Colonic mucosa (tissue), 4 donors: ENCODE measurements at regions of chr6 and their contacts with region 1.

Region 1: DNA sequence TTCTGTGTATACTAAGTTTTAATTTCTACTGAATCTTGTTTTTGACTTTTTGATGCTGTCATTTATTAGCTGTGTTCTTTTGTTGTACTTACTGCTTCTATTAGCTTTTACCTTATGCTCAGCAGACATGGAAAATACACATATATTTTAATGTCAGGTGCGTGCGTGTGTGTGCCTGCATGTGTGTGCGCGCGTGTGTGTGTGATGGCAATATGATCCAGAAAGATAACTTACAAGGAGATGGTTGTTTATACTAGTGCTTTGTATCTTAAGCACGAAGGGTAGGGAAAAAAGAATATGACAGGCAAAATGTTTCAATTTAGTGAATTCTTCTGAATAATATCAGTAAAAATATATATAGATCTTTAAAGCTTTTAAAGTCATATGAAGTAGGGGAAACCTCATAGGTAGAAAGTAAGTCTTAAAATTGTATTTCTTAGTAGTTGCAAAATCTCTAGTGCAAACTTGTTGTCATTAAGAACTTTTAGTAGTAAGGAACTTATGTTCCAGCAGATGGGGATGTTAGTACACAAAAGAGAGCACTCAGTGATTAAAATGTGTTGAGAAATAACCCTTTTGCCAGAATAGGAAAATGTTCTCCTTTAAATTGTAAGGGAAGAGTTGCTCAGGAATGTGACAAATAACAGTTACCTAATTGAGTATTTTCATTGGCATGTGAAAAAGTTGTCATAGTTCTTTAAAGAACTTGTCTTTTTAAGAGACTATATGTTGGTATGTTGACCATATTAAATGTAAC is 13.2 kb downstream of the QKI start:
- DNase-seq: no peak
- H3K4me3 ChIP-seq: no peak overlapping the region
- H3K27ac ChIP-seq: no peak overlapping the region
- H3K4me1 ChIP-seq: no peaks in the 10 kb centered on the region
- H3K27me3 ChIP-seq: no peaks in the 10 kb centered on the region
- CTCF ChIP-seq: peak; percentile 20

Region 2: GRCh38 chr6:163137398-163137881 is 290.2 kb before region 1 on chr6:
- intact Hi-C with region 1: no loop called
- DNase-seq: no peak
- H3K4me3 ChIP-seq: no peak overlapping the region
- H3K27ac ChIP-seq: no peak overlapping the region
- H3K4me1 ChIP-seq: no peaks in the 10 kb centered on the region
- H3K27me3 ChIP-seq: no peaks in the 10 kb centered on the region
- CTCF ChIP-seq: no peak

Region 3: DNA sequence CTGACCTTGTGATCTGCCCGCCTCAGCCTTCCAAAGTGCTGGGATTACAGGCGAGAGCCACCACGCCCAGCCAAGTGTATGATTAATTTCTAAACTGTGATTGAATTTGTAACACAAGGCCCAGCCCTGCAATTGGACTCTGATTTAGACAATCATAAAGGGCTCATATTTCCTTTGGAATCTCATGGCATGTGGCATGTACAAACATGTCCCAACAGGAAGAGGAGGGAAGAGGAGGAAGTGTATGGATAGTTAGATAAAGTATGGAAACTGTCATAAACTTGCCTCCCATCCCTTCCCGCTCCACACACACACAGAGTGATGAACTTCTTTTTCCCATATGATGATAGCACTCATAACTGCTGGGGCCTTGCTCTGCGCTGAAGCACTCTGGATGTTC is 40.4 kb before region 1 on chr6:
- intact Hi-C with region 1: no loop called
- DNase-seq: peak; percentile 35
- H3K4me3 ChIP-seq: no peak overlapping the region
- H3K27ac ChIP-seq: no peak overlapping the region
- H3K4me1 ChIP-seq: no peaks in the 10 kb centered on the region
- H3K27me3 ChIP-seq: no peaks in the 10 kb centered on the region
- CTCF ChIP-seq: no peak

Region 4: DNA sequence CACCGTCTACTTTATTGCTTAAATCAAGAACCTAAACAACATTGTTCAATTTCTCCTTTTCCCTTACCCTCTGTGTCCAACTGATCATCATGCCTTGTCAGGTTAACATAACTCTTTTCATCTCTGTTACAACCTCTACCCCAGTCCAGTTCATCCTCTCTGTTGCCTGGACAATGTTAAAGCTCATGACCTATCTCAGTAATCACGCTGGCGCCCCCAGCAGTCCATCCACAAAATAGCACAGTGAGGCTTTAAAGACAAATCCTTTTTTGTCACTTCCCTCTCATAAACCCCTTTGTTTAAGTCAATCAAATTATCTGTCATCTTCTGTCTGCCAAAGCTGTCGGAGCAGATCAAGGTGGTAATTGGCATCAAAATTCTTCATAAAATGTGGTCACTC is 127.0 kb after region 1 on chr6:
- intact Hi-C with region 1: loop called (anchors 5 kb)
- DNase-seq: peak; percentile 47
- H3K4me3 ChIP-seq: no peak overlapping the region
- H3K27ac ChIP-seq: no peak overlapping the region
- H3K4me1 ChIP-seq: no peaks in the 10 kb centered on the region
- H3K27me3 ChIP-seq: no peaks in the 10 kb centered on the region
- CTCF ChIP-seq: peak; percentile 49

Region 5: GRCh38 chr6:163872335-163872734 is 444.7 kb after region 1 on chr6:
- intact Hi-C with region 1: no loop called
- DNase-seq: no peak
- H3K4me3 ChIP-seq: no peak overlapping the region
- H3K27ac ChIP-seq: no peak overlapping the region
- H3K4me1 ChIP-seq: no peaks in the 10 kb centered on the region
- H3K27me3 ChIP-seq: no peaks in the 10 kb centered on the region
- CTCF ChIP-seq: no peak

Region 6: DNA sequence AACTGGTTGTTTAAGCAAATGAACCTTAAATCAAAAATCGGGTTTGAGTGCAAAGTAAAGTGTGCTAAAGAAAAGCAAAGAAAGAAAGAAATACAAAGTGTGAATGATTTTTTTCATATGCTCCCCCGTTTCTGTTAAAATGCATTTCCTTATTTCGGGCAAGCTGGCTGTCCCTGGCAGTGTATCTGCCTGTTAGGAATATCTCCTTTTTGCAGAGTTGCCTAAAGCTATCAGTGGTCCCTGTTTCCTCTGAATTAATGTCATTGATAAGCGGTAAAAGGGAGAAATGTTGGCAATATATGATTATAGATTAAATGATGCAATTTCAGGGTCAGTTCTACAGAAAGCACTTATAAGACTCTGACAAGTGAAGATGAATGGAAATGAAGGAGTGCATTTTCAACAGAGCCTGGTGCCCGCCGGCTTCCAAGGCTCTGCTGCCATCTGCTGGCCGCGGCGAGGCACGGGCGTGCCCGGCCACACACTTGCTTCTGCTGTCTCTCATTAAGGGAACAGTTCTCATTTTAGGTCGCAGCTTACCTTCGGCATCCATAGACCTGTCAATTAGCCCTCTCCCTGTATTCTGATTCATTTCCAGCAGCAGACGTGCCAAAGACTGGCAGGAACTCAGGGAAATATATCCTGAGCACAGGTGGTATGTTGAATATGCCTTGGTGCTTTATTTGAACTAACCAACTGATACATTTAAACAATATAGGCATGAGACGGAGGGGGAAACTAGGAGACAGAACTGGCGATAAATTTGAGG is 1499.8 kb after region 1 on chr6:
- intact Hi-C with region 1: loop called (anchors 10 kb)
- DNase-seq: peak; percentile 39
- H3K4me3 ChIP-seq: no peak overlapping the region
- H3K27ac ChIP-seq: no peak overlapping the region
- H3K4me1 ChIP-seq: no peaks in the 10 kb centered on the region
- H3K27me3 ChIP-seq: no peaks in the 10 kb centered on the region
- CTCF ChIP-seq: peak; percentile 88